Activated naive CD8-positive, alpha-beta T cell treated with anti-CD3 and anti-CD28 coated beads, Interleukin-2, amount 10 ng/mL, durations not matched to agents 7 days and 5 days (primary cell): ENCODE measurements at regions of chr1 and their contacts with region 1.

Region 1: DNA sequence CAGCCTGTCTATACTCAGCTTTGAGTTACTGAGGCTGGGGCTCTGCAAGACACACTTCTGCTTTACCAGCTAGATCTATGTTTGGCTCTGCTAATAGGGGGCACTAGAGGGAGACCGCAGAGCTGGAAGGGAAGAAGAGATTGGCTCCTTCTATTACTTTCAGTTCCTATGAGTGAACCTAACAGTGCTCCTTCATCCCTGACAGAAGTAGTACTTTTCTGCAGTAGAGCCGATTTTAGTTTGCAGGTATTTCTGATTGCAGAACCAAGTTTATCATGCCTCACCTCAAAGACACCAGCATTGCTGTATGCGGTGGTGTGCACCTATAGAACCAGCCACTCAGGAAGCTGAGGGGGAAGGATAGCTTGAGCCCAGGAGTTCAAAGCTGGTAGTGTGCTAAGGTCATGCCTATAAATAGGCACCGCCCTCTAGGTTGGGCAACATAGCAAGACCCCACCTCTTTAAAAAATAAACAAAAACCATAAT is 5.7 kb upstream of the ZDHHC18 start:
- DNase-seq: no peak
- ATAC-seq: peak; percentile 97
- H3K4me3 Mint-ChIP-seq: peak overlapping the region; percentile 79
- H3K27ac Mint-ChIP-seq: peak overlapping the region; percentile 72
- H3K4me1 Mint-ChIP-seq: peaks cover 19% of the 10 kb centered on the region
- H3K27me3 Mint-ChIP-seq: no peaks in the 10 kb centered on the region

Region 2: GRCh38 chr1:26723013-26723991 is 97.5 kb before region 1 on chr1:
- POLR2A ChIA-PET with region 1: no interaction called
- DNase-seq: peak; percentile 39
- ATAC-seq: peak; percentile 68
- H3K4me3 Mint-ChIP-seq: peak overlapping the region; percentile 51
- H3K27ac Mint-ChIP-seq: peak overlapping the region; percentile 5
- H3K4me1 Mint-ChIP-seq: peaks cover 67% of the 10 kb centered on the region
- H3K27me3 Mint-ChIP-seq: no peaks in the 10 kb centered on the region

Region 3: DNA sequence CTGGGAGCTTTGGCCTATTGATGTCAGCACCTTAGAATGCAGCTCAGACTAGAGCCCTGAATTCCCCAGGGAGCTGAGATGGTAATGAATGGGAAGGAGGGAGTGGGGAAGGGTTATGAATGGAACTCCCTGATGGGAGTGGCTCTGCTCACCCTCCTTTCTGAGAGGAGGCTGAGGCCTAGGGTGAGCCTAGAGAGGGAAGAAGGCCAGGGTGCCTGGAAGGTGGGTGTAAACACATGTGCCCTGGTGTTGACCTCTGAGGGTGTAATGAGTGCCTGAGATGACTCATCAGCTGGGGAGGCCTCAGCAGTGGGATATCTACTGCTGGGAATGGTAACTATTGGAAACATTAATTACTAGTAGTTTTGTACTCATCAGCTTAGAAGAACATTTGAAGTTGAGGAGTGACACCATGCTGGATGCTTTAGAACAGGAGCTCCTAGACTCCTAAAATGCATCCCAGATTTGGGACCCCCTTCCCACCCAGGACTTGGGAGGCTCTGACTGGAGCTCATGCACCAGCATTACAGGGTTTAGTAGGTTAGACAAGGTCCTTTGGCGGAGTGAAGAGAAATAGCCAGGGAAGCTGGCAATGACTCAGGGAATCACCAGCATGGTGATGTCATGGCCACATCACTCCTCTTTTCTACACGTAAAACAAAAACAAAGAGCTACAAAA is 49.0 kb before region 1 on chr1:
- POLR2A ChIA-PET with region 1: no interaction called
- DNase-seq: no peak
- ATAC-seq: peak; percentile 41
- H3K4me3 Mint-ChIP-seq: no peak overlapping the region
- H3K27ac Mint-ChIP-seq: peak overlapping the region; percentile 46
- H3K4me1 Mint-ChIP-seq: peaks cover 14% of the 10 kb centered on the region
- H3K27me3 Mint-ChIP-seq: no peaks in the 10 kb centered on the region

Region 4: GRCh38 chr1:26833432-26834405 is 12.9 kb after region 1 on chr1:
- POLR2A ChIA-PET with region 1: interaction called, 28 read pairs
- DNase-seq: peak; percentile 83
- ATAC-seq: peak; percentile 95
- H3K4me3 Mint-ChIP-seq: peak overlapping the region; percentile 80
- H3K27ac Mint-ChIP-seq: peak overlapping the region; percentile 98
- H3K4me1 Mint-ChIP-seq: peaks cover 53% of the 10 kb centered on the region
- H3K27me3 Mint-ChIP-seq: no peaks in the 10 kb centered on the region